ENCODE measurements at regions of chr21 and their contacts with region 1.

Region 1: GRCh38 chr21:42892931-42893755 is at the start of gene NDUFV3:
- DNase-seq: peak; percentile 98
- H3K4me3 ChIP-seq: peak within 1 kb of the TSS; percentile 74 to 88 (median 76)
- H3K27ac ChIP-seq: peak within 1 kb of the TSS; percentile 97
- H3K4me1 ChIP-seq: peaks cover 8% of the 10 kb centered on the region
- H3K27me3 ChIP-seq: no peaks in the 10 kb centered on the region
- CTCF ChIP-seq: no peak
- total RNA-seq, gene NDUFV3: 36.3 to 50.3 TPM

Region 2: GRCh38 chr21:42440187-42440792 is 452.9 kb before region 1 on chr21:
- CTCF ChIA-PET with region 1: no interaction called
- dilution Hi-C with region 1: no loop called
- in situ Hi-C with region 1: no loop called
- intact Hi-C with region 1: no loop called
- DNase-seq: no peak
- H3K4me3 ChIP-seq: no peak overlapping the region
- H3K27ac ChIP-seq: no peak overlapping the region
- H3K4me1 ChIP-seq: no peaks in the 10 kb centered on the region
- H3K27me3 ChIP-seq: no peaks in the 10 kb centered on the region
- CTCF ChIP-seq: no peak

Region 3: DNA sequence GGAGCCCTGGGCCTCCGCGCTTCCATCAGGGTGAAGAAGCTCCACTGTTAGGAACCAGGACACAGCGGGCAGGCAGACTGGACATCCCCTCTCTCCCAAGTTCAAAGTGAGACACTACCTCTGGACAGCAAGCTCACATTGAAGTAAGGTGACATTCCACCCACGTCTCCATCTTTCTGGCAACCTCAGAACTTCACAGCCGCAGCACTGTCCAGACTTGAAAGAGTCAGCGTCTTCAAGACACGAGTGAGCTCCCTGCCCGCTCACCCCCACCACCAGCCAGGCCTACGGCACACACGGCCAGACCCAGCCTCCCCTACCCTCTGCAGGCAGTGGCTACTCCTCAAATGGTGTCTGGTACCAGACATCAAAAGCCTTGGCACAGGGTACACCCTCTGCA is 24.9 kb before region 1 on chr21:
- CTCF ChIA-PET with region 1: no interaction called
- dilution Hi-C with region 1: no loop called
- in situ Hi-C with region 1: no loop called
- intact Hi-C with region 1: no loop called
- DNase-seq: no peak
- H3K4me3 ChIP-seq: no peak overlapping the region
- H3K27ac ChIP-seq: no peak overlapping the region
- H3K4me1 ChIP-seq: no peaks in the 10 kb centered on the region
- H3K27me3 ChIP-seq: no peaks in the 10 kb centered on the region
- CTCF ChIP-seq: no peak

Region 4: GRCh38 chr21:42878993-42879787 is 14.0 kb before region 1 on chr21 and contains the start of gene WDR4:
- CTCF ChIA-PET with region 1: no interaction called
- dilution Hi-C with region 1: no loop called
- in situ Hi-C with region 1: no loop called
- intact Hi-C with region 1: loop called (anchors 1 kb)
- DNase-seq: peak; percentile 97
- H3K4me3 ChIP-seq: peak within 1 kb of the TSS; percentile 82 to 89 (median 88)
- H3K27ac ChIP-seq: peak within 1 kb of the TSS; percentile 67
- H3K4me1 ChIP-seq: peaks cover 11% of the 10 kb centered on the region
- H3K27me3 ChIP-seq: no peaks in the 10 kb centered on the region
- CTCF ChIP-seq: no peak
- total RNA-seq, gene WDR4: 11.2 to 38.8 TPM

Region 5: DNA sequence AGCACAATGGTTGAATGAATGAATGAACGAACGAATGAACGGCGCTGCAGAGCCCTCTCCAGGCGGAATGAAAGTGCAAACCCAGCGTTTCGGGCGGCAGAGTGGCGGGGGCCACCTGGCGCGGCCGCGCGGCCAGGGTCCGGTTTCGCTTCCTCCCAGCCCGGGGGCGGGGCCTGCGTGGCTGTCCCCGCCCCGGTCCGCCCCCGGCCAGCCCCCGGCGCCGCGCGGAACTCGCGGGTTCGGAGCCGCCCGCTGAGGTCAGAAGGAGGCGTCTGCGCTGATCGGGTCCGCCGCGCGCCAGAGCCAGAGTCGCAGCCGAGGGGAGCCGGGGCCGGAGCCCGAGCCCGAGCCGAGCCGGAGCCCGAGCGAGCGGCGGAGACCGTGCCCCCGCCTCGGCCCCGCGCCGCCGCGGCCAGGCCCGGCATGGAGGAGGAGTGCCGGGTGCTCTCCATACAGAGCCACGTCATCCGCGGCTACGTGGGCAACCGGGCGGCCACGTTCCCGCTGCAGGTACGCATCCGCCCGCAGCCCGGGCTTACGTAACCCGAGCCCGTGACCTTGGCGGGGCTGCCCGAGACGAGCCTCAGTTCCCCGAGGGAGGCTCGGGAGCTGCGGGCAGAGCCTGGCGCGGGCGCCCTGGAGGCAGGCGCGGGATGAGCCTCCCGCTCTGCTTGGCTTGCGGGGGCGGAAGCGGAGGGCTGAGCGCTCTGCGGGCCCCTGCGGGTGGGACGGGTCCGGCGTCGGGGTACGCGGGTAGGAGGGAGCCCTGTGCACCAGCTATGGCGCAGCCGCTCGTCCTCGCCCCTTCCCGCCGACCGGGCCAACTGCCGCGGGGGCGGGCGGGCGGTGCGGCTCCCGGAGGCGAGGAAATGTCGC is 826.0 kb after region 1 on chr21 and contains the start of gene PDXK:
- CTCF ChIA-PET with region 1: no interaction called
- dilution Hi-C with region 1: no loop called
- in situ Hi-C with region 1: loop called in 1 of 2 experiments (anchors 25 kb)
- intact Hi-C with region 1: no loop called
- DNase-seq: peak; percentile 79
- H3K4me3 ChIP-seq: peak within 1 kb of the TSS; percentile 58 to 98 (median 97)
- H3K27ac ChIP-seq: peak within 1 kb of the TSS; percentile 76
- H3K4me1 ChIP-seq: peaks cover 33% of the 10 kb centered on the region
- H3K27me3 ChIP-seq: no peaks in the 10 kb centered on the region
- CTCF ChIP-seq: peak in 1 of 2 donors; percentile 14
- total RNA-seq, gene PDXK: 51.5 to 152 TPM